ENCODE measurements at regions of chr11 and their contacts with region 1.

Region 1: GRCh38 chr11:103108933-103109817 is at the start of gene DYNC2H1:
- DNase-seq: peak; percentile 93
- ATAC-seq: peak; percentile 94
- H3K4me3 Mint-ChIP-seq: peak within 1 kb of the TSS; percentile 90
- H3K27ac Mint-ChIP-seq: peak within 1 kb of the TSS; percentile 89
- H3K4me1 Mint-ChIP-seq: peaks cover 28% of the 10 kb centered on the region
- H3K27me3 Mint-ChIP-seq: peaks cover 13% of the 10 kb centered on the region
- total RNA-seq, gene DYNC2H1: 4.3 to 4.9 TPM

Region 2: DNA sequence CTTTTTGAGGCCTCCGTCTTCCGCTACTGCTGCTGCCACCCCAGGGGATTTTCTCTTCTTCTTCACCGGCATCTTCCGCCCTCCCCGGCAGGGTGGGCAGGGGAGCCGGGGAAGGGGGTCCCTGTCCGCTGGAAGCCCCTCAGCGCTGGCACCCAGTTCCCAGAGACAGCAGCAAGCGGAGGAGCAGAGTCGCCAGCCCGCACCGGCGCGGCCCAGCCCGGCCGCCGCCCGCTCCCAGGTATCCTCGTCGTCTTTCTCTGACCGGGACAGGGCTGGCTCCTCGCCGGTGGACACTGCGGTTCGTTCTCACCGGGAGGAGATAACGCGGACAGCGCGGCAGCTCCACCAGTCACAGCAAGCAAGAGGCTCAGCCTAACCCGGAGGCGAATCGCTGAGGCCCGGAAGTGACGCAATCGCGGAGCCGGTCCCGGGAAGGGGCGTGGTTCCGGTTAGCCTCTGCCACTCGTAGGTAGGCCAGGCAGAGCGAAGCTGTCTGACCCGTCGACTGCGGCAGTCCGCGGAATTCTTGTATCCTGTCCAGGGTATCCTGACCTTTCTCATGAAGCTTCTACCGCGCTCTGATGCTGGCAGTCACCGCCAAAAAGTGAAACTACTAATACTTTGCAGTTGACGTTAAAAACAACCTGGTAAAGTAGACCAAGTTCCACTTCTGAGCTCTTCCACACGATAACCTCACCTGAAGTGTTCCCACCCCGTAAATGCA is 17.2 kb before region 1 on chr11 and contains the start of gene DCUN1D5:
- CTCF ChIA-PET with region 1: interaction called, 28 read pairs
- DNase-seq: peak; percentile 97
- ATAC-seq: peak; percentile 95
- H3K4me3 Mint-ChIP-seq: peak within 1 kb of the TSS; percentile 91
- H3K27ac Mint-ChIP-seq: peak within 1 kb of the TSS; percentile 96
- H3K4me1 Mint-ChIP-seq: peaks cover 23% of the 10 kb centered on the region
- H3K27me3 Mint-ChIP-seq: peaks cover 27% of the 10 kb centered on the region
- total RNA-seq, gene DCUN1D5: 38.4 to 51.3 TPM

Region 3: GRCh38 chr11:103097279-103097678 is 11.9 kb before region 1 on chr11:
- CTCF ChIA-PET with region 1: interaction called, 28 read pairs
- DNase-seq: no peak
- ATAC-seq: no peak
- H3K4me3 Mint-ChIP-seq: no peak overlapping the region
- H3K27ac Mint-ChIP-seq: no peak overlapping the region
- H3K4me1 Mint-ChIP-seq: peaks cover 7% of the 10 kb centered on the region
- H3K27me3 Mint-ChIP-seq: peaks cover 34% of the 10 kb centered on the region

Measured in activated CD8-positive, alpha-beta memory T cell treated with anti-CD3 and anti-CD28 coated beads, Interleukin-2, amount 10 ng/mL, durations not matched to agents 7 days and 5 days (primary cell).